PC-3 (cell line): ENCODE measurements at regions of chr10 and their contacts with region 1.

Region 1: DNA sequence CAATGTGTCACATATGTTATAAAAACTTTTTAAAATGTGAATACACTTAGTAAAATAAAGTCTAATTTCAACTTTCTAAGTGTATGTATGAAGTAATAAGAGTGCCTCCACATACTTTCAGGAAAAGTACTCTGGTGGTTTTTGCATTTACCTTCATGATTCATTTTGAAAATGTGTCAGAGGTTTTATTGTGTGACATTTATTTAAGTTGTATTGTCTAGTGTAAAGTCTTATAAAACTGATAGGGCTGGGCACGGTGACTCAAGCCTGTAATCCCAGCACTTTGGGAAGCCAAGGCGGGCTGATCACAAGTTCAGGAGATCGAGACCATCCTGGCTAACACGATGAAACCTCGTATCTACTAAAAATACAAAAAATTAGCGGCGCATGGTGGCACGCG is 226.5 kb downstream of the ITGB1 start:
- DNase-seq: peak; percentile 96
- ATAC-seq: peak; percentile 94
- H3K4me3 ChIP-seq: no peak overlapping the region
- H3K27ac ChIP-seq: peak overlapping the region; percentile 47
- H3K4me1 ChIP-seq: peaks cover 20% of the 10 kb centered on the region
- H3K27me3 ChIP-seq: no peaks in the 10 kb centered on the region
- CTCF ChIP-seq: no peak

Region 2: DNA sequence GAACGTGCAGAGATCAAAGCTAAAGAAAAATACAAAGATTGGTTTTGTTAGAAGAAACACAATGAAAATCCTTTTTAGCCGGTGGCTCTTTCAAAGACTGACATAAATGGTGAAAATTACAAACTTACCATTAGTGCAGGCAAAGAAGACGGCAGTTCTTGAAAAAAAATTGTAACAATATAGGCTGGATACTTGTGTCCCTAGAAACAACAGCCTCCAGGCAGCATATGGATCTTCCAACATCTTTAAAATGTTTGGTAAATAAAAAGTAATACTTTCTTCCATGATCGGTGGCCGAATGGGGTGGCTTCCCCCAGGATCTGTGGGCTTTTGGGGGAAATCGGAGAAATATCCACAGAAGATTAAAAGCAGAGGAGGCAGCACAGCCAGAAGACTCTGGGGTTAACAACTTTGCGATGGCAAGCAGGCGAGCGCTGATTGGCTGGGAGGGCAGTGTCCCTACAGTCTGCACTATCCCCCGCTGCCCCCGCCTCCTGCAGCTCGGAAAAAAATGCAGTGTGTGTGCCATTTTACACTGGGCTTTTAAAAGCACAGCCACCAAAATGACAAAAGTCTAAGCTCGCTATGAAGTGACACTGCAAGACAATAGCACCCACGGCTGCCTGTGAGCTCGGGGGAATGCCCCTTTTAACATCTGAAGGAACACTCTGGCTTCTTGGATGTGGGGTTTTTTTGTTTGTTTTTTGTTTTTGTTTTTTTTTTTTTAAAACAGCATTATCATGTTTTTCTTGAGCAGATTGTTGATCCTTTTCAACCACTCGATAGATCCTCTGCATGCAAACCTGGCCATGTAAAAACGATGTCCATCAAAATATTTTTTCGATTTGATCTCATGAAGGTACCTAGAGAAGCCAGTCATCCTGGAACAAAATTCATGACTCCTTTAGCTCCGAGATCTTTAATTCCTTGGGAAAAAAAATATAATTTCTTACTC is 352.9 kb before region 1 on chr10:
- CTCF ChIA-PET with region 1: no interaction called
- POLR2A ChIA-PET with region 1: no interaction called
- intact Hi-C with region 1: loop called (anchors 10 kb)
- DNase-seq: peak; percentile 96
- ATAC-seq: peak; percentile 90
- H3K4me3 ChIP-seq: peak overlapping the region; percentile 74
- H3K27ac ChIP-seq: peak overlapping the region; percentile 68
- H3K4me1 ChIP-seq: peaks cover 55% of the 10 kb centered on the region
- H3K27me3 ChIP-seq: no peaks in the 10 kb centered on the region
- CTCF ChIP-seq: no peak

Region 3: DNA sequence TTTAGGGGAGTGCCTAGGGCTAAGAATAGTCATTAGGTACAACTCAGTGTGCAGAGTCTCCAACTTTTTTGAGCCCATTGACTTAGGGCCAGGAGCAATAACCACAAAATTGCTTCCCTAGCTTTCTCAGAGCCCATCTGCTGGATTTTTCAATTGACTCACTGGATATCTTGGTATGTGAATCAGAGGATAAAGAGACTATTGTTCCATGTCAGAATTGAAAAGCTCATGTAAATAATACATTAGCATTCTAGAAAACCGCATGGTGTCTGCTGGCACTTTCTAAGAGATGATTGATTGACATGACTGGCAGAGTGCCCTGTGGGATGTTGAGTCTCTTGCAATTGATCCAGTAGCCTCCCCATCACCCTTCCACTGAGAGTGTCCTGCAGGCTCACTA is 39.4 kb before region 1 on chr10:
- CTCF ChIA-PET with region 1: no interaction called
- POLR2A ChIA-PET with region 1: no interaction called
- intact Hi-C with region 1: loop called (anchors 2 kb)
- DNase-seq: peak; percentile 100
- ATAC-seq: peak; percentile 95
- H3K4me3 ChIP-seq: no peak overlapping the region
- H3K27ac ChIP-seq: peak overlapping the region; percentile 73
- H3K4me1 ChIP-seq: peaks cover 34% of the 10 kb centered on the region
- H3K27me3 ChIP-seq: no peaks in the 10 kb centered on the region
- CTCF ChIP-seq: no peak

Region 4: GRCh38 chr10:32790483-32790882 is 59.0 kb after region 1 on chr10:
- CTCF ChIA-PET with region 1: no interaction called
- POLR2A ChIA-PET with region 1: no interaction called
- intact Hi-C with region 1: no loop called
- DNase-seq: no peak
- ATAC-seq: no peak; the same call in 1 of the 2 replicates
- H3K4me3 ChIP-seq: no peak overlapping the region
- H3K27ac ChIP-seq: no peak overlapping the region
- H3K4me1 ChIP-seq: no peaks in the 10 kb centered on the region
- H3K27me3 ChIP-seq: no peaks in the 10 kb centered on the region
- CTCF ChIP-seq: no peak

Region 5: GRCh38 chr10:32865170-32865569 is 133.6 kb after region 1 on chr10:
- CTCF ChIA-PET with region 1: no interaction called
- POLR2A ChIA-PET with region 1: no interaction called
- intact Hi-C with region 1: loop called (anchors 10 kb)
- DNase-seq: peak; percentile 49
- ATAC-seq: peak; percentile 64
- H3K4me3 ChIP-seq: no peak overlapping the region
- H3K27ac ChIP-seq: no peak overlapping the region
- H3K4me1 ChIP-seq: no peaks in the 10 kb centered on the region
- H3K27me3 ChIP-seq: no peaks in the 10 kb centered on the region
- CTCF ChIP-seq: no peak